ENCODE measurements at regions of chr2 and their contacts with region 1.

Region 1: GRCh38 chr2:238513346-238513745 is 86.6 kb downstream of the ASB1 start:
- DNase-seq: peak; percentile 58
- CTCF ChIP-seq: peak; percentile 45

Region 2: DNA sequence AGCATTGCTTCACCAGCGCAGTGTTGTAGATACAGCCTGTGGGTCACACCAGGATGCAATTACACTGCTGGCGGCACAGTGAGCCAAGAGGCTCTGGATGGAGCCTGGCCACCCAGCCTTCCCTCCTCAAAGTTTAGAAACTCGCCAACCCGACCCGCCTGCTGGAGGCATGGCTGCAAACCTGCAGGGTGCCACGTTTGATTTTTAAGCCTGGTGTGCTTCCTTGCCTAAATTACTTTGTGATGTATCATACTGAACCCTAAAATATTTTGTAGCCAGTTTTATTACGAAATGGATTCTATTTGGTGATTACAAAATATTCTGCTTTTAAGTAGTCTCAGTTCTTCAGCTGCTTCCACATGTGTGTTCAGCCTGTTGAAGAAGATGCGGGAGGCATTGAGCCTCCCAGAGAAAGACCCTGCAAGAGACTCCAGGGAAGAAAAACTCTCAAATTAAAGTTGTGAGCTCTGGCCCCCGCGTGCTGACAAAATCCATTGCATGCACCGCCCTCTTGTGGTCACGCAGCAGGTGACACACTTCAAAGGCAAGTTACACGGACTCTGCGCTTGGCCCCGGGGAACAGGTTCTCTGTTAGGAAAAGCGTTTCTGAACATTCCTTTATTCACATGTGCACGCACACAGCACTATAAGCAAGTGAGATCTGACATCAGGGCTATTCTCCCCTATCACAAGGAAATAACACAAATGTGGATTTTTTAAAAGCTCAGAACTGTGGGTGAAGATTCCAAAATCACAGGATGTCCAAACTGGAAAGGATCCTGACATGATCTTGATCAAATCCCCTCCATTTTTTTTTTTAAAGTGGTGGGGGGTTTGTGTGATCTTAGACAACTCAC is 271.6 kb after region 1 on chr2:
- CTCF ChIA-PET with region 1: interaction called, 12 read pairs
- POLR2A ChIA-PET with region 1: no interaction called
- DNase-seq: peak; percentile 75
- CTCF ChIP-seq: peak; percentile 79

Measured in GM10248 (cell line).